Panc1 (cell line): ENCODE measurements at regions of chr4 and their contacts with region 1.

Region 1: DNA sequence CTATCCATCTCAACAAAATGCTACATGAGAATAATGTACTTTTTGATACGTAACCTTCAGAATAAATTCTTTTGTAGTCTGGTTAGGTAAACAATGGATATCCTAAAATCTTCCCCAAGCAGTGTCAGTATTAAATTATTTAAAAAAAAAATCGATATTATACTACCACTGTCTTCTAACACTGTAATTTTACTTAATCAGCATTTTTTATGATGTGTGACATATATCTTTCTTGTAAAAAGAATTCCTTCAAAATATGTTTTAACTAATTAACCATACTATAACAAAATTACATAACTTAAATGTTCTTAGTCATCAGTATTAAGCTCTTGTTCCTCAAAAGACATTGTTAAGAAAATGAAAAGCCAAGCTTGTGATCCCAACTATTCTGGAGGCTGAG is 12.5 kb downstream of the OTUD4 start:
- DNase-seq: no peak
- ATAC-seq: no peak
- H3K4me3 ChIP-seq: no peak overlapping the region
- H3K27ac ChIP-seq: no peak overlapping the region
- H3K4me1 ChIP-seq: no peaks in the 10 kb centered on the region
- H3K27me3 ChIP-seq: no peaks in the 10 kb centered on the region
- CTCF ChIP-seq: no peak

Region 2: GRCh38 chr4:145061318-145061920 is 106.5 kb before region 1 on chr4:
- CTCF ChIA-PET with region 1: no interaction called
- POLR2A ChIA-PET with region 1: no interaction called
- in situ Hi-C with region 1: no loop called
- intact Hi-C with region 1: no loop called
- DNase-seq: peak; percentile 28
- ATAC-seq: no peak; the same call in 1 of the 2 replicates
- H3K4me3 ChIP-seq: no peak overlapping the region
- H3K27ac ChIP-seq: no peak overlapping the region
- H3K4me1 ChIP-seq: peaks cover 5% of the 10 kb centered on the region
- H3K27me3 ChIP-seq: no peaks in the 10 kb centered on the region
- CTCF ChIP-seq: peak; percentile 19; the same call in 1 of the 2 replicates

Region 3: GRCh38 chr4:145177906-145178538 is 10.1 kb after region 1 on chr4:
- CTCF ChIA-PET with region 1: no interaction called
- POLR2A ChIA-PET with region 1: interaction called, 12 read pairs
- in situ Hi-C with region 1: no loop called
- intact Hi-C with region 1: no loop called
- DNase-seq: no peak
- ATAC-seq: no peak
- H3K4me3 ChIP-seq: peak overlapping the region; percentile 71 to 73
- H3K27ac ChIP-seq: peak overlapping the region; percentile 84
- H3K4me1 ChIP-seq: peaks cover 7% of the 10 kb centered on the region
- H3K27me3 ChIP-seq: no peaks in the 10 kb centered on the region
- CTCF ChIP-seq: no peak